Sciatic nerve (tissue), 2 donors: ENCODE measurements at regions of chr10 and their contacts with region 1.

Region 1: DNA sequence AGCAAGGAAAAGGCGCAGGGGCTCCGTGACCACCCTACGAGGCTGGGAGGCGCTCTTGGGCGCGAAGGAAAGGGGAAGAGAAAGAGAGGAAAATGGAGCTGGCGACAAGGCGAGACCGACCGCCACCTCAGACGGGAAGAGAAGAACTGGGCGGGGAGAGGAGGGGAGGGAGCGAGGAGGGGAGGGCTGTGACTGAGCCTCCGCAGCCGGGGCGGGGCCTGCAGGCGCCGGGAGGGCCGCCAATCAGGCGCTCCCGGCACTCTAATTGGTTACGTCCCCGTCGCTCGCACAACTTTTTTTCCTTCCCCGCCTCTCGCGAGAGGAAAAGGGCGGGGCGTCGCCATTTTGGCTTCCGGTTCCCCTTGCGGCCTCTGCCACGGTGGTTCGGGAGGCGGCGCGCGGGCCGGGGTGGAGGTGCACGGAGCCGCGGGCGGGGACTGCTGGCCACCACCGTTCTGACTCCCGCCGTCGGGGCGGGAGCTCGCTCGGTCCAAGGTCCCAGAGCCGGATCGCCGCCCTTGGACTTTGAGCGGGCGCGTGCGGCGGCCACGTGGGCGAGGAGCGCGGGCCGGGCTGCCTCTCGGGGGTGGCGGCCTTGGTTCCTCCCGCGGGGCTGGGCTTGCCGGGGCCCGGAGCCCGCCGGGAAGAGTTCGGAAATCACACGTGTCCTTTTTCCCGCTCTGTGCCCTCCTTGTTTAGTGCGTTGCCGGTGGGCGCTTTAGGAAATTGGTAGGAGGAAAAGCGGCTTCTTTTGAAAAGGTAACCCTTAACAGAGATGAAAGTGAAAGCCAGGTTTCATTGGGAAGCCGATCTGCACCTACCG is at the start of gene GDI2:
- DNase-seq: peak; percentile 98
- ATAC-seq: peak; percentile 100
- total RNA-seq, gene GDI2: 140 TPM

Region 2: GRCh38 chr10:5764422-5765297 is 48.8 kb before region 1 on chr10:
- intact Hi-C with region 1: no loop called
- DNase-seq: no peak
- ATAC-seq: no peak

Region 3: GRCh38 chr10:5889624-5890451 is 76.3 kb after region 1 on chr10 and contains the starts of genes ANKRD16 and FBH1:
- intact Hi-C with region 1: loop called (anchors 10 kb)
- DNase-seq: peak; percentile 99
- ATAC-seq: peak; percentile 99
- total RNA-seq, gene ANKRD16: 10.0 TPM
- total RNA-seq, gene FBH1: 85.3 TPM